ENCODE measurements at regions of chr18 and their contacts with region 1.

Region 1: GRCh38 chr18:9951022-9951859 is 37.4 kb downstream of the VAPA start:
- DNase-seq: peak; percentile 43
- H3K4me3 ChIP-seq: no peak overlapping the region
- H3K27ac ChIP-seq: no peak overlapping the region
- H3K27me3 ChIP-seq: no peaks in the 10 kb centered on the region
- CTCF ChIP-seq: peak; percentile 86

Region 2: DNA sequence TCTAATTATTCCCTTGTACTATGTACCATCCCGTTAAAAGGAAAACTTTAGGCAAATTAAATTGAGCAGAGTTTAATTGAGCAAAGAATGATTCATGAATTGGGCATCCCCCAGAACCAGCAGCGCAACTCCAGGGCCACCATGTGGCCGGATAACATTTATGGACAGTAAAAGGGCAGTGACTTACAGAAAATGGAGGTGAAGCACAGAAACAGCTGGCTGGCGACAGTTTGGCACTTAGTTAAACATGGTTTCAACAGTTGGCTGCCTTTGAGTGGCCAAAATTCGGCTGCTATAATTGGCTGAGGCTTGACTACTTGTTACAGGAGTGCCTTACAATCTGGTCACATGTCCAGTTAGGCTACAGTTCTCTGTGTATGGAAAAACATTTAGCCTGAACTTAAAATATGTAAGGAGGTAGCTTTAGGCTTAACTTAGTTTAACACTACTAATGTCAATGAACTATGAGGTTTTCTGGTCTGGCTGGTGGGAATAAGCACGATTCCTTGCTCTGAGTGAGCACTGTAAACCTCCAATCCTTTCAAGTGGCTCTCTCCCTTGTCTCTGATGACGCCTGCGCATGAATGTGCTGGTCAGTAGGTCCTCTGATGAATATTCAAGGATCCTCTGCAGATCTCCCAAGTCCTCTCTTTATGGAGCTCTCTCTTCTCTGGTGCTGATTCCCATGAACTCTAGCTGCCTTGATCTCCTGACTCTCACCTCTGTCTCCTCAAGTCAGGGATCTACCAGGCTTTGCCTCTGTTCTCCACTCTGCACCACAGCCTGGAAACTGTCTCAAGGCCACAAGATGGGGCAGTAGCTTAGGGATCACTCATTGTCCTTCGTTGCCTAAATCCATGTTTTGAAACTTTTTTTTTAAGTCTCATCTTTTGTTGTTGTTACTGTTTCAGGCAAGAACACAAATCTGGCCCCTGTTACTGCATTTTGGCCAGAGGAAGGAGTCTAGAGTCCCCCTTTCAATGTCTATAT is 267.5 kb before region 1 on chr18:
- CTCF ChIA-PET with region 1: interaction called, 17 read pairs
- POLR2A ChIA-PET with region 1: no interaction called
- DNase-seq: no peak
- H3K4me3 ChIP-seq: no peak overlapping the region
- H3K27ac ChIP-seq: no peak overlapping the region
- H3K27me3 ChIP-seq: no peaks in the 10 kb centered on the region
- CTCF ChIP-seq: peak; percentile 57

Region 3: DNA sequence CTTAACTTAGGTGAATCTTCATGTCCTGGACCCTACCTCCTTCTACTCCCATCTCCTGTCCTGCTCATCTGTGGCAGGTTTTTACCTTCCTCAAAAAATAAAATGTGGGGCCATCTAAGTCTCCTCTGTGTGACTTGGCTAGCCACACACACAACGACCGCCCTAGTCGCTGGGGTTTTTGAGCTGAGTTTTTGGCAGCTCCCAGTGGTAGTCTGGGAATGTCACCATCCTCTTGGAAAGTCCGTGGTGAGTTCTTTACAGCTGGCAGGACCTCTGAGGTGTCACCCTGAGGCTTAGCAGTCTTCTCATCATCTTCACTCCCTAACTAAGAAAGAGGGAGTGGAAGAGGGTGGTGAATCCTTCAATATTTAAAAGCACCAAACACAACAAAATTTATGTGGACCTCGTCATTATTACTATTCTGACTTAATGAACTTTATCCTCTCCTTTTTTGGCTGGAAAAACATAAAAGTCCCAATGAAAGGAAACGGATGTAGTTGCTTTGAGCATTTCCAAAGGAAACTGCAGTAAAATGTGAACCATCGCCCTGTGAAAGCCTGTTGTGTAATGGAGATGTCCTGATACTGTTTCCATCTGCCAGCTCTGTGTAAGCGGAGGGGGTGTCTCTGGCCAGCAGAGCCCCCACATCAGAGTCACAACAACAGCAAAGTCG is 41.2 kb after region 1 on chr18:
- CTCF ChIA-PET with region 1: no interaction called
- POLR2A ChIA-PET with region 1: no interaction called
- DNase-seq: no peak
- H3K4me3 ChIP-seq: no peak overlapping the region
- H3K27ac ChIP-seq: no peak overlapping the region
- H3K27me3 ChIP-seq: peaks cover 51% of the 10 kb centered on the region
- CTCF ChIP-seq: no peak

Region 4: DNA sequence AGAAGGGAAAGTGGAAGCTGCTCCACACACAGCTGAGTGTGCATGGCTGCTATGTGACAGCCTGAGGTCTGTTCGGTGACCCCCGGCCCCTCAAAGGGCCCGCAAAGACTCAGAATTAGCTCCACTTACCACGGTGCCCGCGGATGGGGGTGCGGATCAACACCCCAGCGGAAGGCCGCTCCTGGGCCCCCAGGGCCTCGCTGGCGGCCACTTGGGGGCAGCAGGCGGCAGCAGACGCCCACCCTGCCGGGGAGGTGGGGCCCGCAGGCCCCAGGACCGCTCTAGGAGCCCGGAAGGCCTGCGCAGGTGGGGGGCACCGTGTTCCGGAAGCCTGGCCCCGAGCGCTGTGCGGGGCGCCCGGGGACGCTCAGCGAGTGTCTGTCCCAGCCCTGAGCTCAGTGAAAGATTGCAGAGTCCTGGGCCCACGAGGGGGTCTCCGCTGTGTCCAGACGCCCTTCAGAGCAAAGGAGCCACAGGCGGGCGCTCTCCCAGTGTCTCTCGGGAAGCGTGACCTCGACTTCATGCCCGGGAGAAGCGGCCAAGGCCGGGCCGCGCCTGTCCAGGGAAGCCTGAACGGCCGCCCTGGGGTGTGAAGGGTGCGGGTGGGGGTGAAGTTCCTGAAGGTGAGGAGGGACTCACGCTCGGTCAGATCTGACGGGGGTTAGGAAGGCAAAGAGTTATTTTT is 81.2 kb after region 1 on chr18:
- CTCF ChIA-PET with region 1: no interaction called
- POLR2A ChIA-PET with region 1: no interaction called
- DNase-seq: no peak
- H3K4me3 ChIP-seq: no peak overlapping the region
- H3K27ac ChIP-seq: no peak overlapping the region
- H3K27me3 ChIP-seq: peaks cover 22% of the 10 kb centered on the region
- CTCF ChIP-seq: peak; percentile 27; the same call in 1 of the 2 replicates

Measured in AG04450 (cell line).